Posterior cingulate gyrus (tissue), 11 donors: ENCODE measurements at regions of chr6 and their contacts with region 1.

Region 1: DNA sequence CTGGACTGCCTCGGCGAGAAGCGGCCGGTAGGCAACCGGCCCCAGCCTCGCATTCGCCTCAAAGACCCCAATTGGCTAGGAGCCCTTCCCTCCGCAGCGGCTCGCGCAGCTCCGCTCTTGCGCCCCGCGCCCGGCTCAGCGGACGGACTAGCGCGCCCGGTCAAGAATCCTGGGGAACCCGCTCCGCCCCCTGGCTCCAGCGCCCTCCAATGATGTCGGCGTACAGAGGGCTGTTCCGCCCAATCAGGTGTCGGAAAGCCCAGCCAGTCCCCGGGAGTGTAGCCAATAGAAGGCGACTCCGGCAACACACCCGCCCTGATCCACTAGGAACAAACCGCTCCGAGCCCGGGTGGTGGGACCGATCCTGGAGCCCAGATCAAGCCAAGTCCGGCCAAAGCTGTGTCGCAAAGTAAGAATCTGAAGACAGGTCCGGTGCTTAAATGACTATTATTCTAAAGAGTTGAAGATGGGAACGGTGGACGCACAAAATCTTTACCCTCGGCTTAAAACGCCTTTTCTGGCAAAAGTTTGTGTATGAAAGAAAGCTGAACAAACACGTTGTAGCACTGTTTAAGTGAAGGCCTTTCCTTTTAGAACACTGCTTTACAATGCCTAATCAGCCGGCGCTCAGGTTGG is 132.2 kb downstream of the OGFRL1 start:
- DNase-seq: peak; percentile 95 to 99 (median 97)

Region 2: GRCh38 chr6:71294121-71294523 is 126.7 kb before region 1 on chr6:
- intact Hi-C with region 1: loop called (anchors 5 kb)
- DNase-seq: no peak